Activated naive CD4-positive, alpha-beta T cell treated with anti-CD3 and anti-CD28 coated beads for 36 hours (primary cell): ENCODE measurements at regions of chr11 and their contacts with region 1.

Region 1: GRCh38 chr11:107565219-107565937 is at the start of gene ALKBH8:
- DNase-seq: peak; percentile 89
- H3K4me3 Mint-ChIP-seq: peak within 1 kb of the TSS; percentile 85
- H3K27ac Mint-ChIP-seq: peak within 1 kb of the TSS; percentile 92
- H3K4me1 Mint-ChIP-seq: peaks cover 48% of the 10 kb centered on the region
- H3K27me3 Mint-ChIP-seq: no peaks in the 10 kb centered on the region
- total RNA-seq, gene ALKBH8: 10.1 to 12.2 TPM

Region 2: GRCh38 chr11:106087815-106088435 is 1477.5 kb before region 1 on chr11:
- CTCF ChIA-PET with region 1: no interaction called
- intact Hi-C with region 1: loop called (anchors 5 kb)
- DNase-seq: peak; percentile 69
- H3K4me3 Mint-ChIP-seq: no peak overlapping the region
- H3K27ac Mint-ChIP-seq: no peak overlapping the region
- H3K4me1 Mint-ChIP-seq: peaks cover 58% of the 10 kb centered on the region
- H3K27me3 Mint-ChIP-seq: no peaks in the 10 kb centered on the region

Region 3: DNA sequence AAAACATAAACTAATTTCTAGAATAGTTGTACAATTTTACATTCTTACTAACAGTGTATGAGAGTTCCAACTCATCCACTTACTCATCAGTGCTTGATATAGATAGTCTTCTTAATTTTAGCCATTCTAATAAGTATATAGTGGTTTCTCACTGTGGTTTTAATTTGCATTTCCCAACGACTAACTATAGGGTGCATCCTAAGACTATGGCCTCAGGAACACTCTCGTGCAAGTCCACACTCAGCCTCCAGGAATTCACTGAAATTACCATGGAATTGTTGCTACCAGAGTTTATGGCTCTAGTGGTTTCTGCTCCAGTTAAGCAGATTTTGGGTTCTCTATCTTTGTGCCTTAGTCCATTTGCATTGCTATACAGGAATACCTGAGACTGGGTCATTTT is 487.0 kb before region 1 on chr11:
- CTCF ChIA-PET with region 1: no interaction called
- intact Hi-C with region 1: no loop called
- DNase-seq: no peak
- H3K4me3 Mint-ChIP-seq: no peak overlapping the region
- H3K27ac Mint-ChIP-seq: no peak overlapping the region
- H3K4me1 Mint-ChIP-seq: no peaks in the 10 kb centered on the region
- H3K27me3 Mint-ChIP-seq: no peaks in the 10 kb centered on the region

Region 4: DNA sequence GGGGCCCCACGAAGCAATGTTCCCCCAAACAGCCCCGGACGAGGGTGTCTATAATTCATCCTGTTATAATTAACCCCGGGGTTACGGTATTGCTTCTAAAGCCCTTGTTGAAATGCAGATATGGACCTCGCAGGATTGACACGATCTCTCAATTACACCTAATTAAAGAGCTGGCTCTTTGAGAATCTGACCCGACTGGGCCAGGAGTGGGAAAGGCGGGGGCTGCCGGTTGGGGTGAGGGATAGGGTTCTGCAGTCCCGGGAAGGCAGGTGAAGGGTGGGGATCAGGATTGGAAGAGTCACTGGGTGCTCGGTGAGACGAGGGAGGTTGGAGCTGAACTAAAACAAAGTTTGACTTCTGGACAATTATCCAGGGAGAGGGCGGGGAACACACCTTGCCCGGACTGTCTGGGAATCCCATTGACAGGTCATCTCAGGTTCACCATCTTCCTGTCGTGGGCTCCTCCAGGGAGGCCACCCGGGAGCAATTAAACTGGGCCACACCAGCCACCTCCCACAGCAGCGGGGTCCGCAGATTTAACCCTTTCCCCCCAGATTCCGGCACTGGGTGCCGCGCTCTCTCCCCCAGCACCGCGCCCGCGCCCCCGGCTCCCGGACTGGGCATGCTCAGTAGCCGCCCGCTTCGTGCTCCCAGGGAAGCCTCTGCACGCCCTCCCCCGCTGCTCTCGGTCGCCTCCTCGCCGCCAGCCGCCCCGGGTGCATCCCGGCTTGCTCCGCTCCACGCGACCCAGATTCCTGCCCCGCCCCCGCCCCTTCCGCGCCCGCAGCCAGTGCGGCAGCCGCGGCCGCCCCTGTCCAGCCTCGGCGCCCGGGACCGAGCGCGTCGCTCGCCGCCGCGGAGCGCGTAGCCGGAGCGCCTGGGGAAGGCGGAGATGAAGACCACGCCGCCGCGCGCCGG is 25.3 kb after region 1 on chr11 and contains the start of gene ELMOD1:
- CTCF ChIA-PET with region 1: interaction called, 4 read pairs
- intact Hi-C with region 1: loop called (anchors 1 kb)
- DNase-seq: peak; percentile 57
- H3K4me3 Mint-ChIP-seq: peak within 1 kb of the TSS; percentile 77
- H3K27ac Mint-ChIP-seq: no peak within 1 kb of the TSS
- H3K4me1 Mint-ChIP-seq: peaks cover 22% of the 10 kb centered on the region
- H3K27me3 Mint-ChIP-seq: peaks cover 71% of the 10 kb centered on the region
- total RNA-seq, gene ELMOD1: not detected

Region 5: DNA sequence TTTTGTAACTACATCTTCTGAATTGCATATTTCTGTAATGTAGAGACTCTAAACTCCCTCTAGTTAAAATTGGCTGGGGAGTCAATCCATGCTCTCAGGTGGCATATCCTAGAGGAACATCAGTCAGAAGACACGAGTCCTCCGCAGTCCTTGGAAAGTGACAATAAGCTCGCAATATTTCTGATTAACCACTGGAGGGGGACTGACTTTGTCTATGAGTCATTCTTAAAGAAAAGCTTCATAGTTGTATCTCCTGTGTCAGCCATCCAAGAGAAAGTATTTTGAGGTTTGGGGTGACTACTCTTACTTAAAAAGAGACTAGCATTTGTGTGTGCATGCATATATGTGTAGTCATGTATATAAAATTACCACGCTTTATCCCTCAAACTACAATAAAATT is 86.3 kb after region 1 on chr11:
- CTCF ChIA-PET with region 1: no interaction called
- intact Hi-C with region 1: no loop called
- DNase-seq: no peak
- H3K4me3 Mint-ChIP-seq: no peak overlapping the region
- H3K27ac Mint-ChIP-seq: no peak overlapping the region
- H3K4me1 Mint-ChIP-seq: no peaks in the 10 kb centered on the region
- H3K27me3 Mint-ChIP-seq: peaks cover 19% of the 10 kb centered on the region

Region 6: GRCh38 chr11:107770551-107770951 is 205.2 kb after region 1 on chr11:
- CTCF ChIA-PET with region 1: interaction called, 6 read pairs
- intact Hi-C with region 1: loop called (anchors 1 kb)
- DNase-seq: no peak
- H3K4me3 Mint-ChIP-seq: no peak overlapping the region
- H3K27ac Mint-ChIP-seq: no peak overlapping the region
- H3K4me1 Mint-ChIP-seq: no peaks in the 10 kb centered on the region
- H3K27me3 Mint-ChIP-seq: peaks cover 4% of the 10 kb centered on the region

Region 7: DNA sequence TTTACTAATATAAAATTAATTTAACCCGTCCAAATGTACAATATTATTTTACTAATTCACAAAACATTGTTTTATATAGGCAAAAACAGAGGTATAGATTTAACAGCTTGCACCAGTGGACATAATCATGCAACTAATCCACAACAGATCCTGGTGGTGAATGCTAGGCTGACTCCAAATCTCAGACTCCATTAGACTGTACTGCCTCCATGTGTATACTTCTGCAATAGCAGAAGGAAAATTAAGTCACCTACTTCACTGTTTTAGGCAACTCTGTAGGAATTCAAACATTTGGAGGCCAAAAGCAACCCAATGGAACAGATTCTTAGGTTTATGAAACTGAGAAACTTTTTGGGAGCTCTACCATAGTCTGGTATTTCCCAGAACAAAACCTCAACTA is 332.9 kb after region 1 on chr11:
- CTCF ChIA-PET with region 1: interaction called, 3 read pairs
- intact Hi-C with region 1: loop called (anchors 5 kb)
- DNase-seq: no peak
- H3K4me3 Mint-ChIP-seq: no peak overlapping the region
- H3K27ac Mint-ChIP-seq: no peak overlapping the region
- H3K4me1 Mint-ChIP-seq: no peaks in the 10 kb centered on the region
- H3K27me3 Mint-ChIP-seq: no peaks in the 10 kb centered on the region

Region 8: GRCh38 chr11:108467091-108467823 is 901.9 kb after region 1 on chr11 and contains the start of gene C11orf65:
- CTCF ChIA-PET with region 1: no interaction called
- intact Hi-C with region 1: loop called (anchors 5 kb)
- DNase-seq: peak; percentile 98
- H3K4me3 Mint-ChIP-seq: peak within 1 kb of the TSS; percentile 94
- H3K27ac Mint-ChIP-seq: peak within 1 kb of the TSS; percentile 96
- H3K4me1 Mint-ChIP-seq: peaks cover 8% of the 10 kb centered on the region
- H3K27me3 Mint-ChIP-seq: no peaks in the 10 kb centered on the region
- total RNA-seq, gene C11orf65: 2.2 to 3.1 TPM